ENCODE measurements at regions of chr6 and their contacts with region 1.

Region 1: GRCh38 chr6:157597446-157598312 is 216.7 kb downstream of the ZDHHC14 start:
- DNase-seq: peak; percentile 62 to 73
- H3K4me3 ChIP-seq: no peak overlapping the region
- H3K4me3 Mint-ChIP-seq: peak overlapping the region; percentile 8
- H3K27ac Mint-ChIP-seq: peak overlapping the region; percentile 76
- H3K4me1 ChIP-seq: peaks cover 12% of the 10 kb centered on the region
- H3K4me1 Mint-ChIP-seq: peaks cover 23% of the 10 kb centered on the region
- H3K27me3 ChIP-seq: no peaks in the 10 kb centered on the region
- H3K27me3 Mint-ChIP-seq: no peaks in the 10 kb centered on the region
- CTCF ChIP-seq: peak; percentile 67 to 68

Region 2: DNA sequence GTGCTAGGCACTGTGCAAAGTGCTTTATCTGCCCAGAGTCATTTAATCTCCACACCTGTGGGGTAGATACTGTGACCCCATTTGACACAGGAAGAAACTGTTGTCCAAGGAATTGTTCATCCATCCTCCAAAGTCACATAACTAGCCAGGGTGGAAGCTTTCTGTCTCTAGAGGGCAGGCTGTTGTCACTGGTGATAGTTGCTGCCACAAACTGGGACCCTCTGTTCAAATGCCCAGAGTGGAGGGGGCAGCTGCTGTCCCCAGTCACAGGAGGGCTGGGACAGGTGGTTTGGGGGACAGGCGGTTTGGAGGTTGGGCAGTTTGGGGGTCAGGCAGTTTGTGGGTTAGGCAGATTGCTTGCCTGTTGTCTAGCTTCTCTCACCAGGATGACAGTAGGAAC is 258.2 kb before region 1 on chr6:
- CTCF ChIA-PET with region 1: interaction called, 3 read pairs
- POLR2A ChIA-PET with region 1: no interaction called
- intact Hi-C with region 1: loop called (anchors 1 kb)
- DNase-seq: no peak
- H3K4me3 ChIP-seq: no peak overlapping the region
- H3K4me3 Mint-ChIP-seq: no peak overlapping the region
- H3K27ac Mint-ChIP-seq: no peak overlapping the region
- H3K4me1 ChIP-seq: 0 out of 2 replicates have a peak, but pooled peaks cover 4% of the 10 kb centered on the region
- H3K4me1 Mint-ChIP-seq: no peaks in the 10 kb centered on the region
- H3K27me3 ChIP-seq: no peaks in the 10 kb centered on the region
- H3K27me3 Mint-ChIP-seq: no peaks in the 10 kb centered on the region
- CTCF ChIP-seq: peak in 1 of 2 experiments; percentile 30

Region 3: DNA sequence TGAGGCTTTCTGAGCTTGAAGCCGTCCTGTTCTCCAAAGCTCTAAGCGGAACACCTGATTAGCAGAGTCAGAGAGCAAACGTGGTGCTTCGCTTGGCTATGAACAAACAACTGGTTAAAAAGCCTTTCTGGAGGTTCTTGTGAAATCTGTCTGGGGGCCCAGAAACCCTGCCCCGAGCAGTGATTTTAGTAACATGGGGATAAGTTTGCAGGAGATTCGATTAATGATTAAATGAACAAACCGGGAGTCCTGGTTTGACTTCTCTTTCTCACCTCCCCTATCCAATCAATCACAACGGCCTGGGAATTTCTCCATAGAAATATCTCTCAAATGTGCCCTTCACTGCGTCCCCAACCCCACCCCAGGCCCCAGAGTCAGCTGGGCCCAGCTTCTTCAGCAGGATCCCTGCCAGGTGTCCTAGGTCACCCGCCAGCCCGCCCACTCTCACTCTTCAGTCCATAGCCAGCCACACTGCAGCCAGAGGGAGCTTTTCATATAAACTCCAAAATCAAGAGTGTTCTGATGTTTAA is 173.1 kb before region 1 on chr6:
- CTCF ChIA-PET with region 1: no interaction called
- POLR2A ChIA-PET with region 1: no interaction called
- intact Hi-C with region 1: loop called (anchors 1 kb)
- DNase-seq: peak; percentile 77 to 82
- H3K4me3 ChIP-seq: 0 out of 2 replicates have a peak overlapping the region, but pooled peaks have one; percentile 5
- H3K4me3 Mint-ChIP-seq: peak overlapping the region; percentile 63
- H3K27ac Mint-ChIP-seq: peak overlapping the region; percentile 92
- H3K4me1 ChIP-seq: peaks cover 29% of the 10 kb centered on the region
- H3K4me1 Mint-ChIP-seq: peaks cover 56% of the 10 kb centered on the region
- H3K27me3 ChIP-seq: no peaks in the 10 kb centered on the region
- H3K27me3 Mint-ChIP-seq: no peaks in the 10 kb centered on the region
- CTCF ChIP-seq: peak in 1 of 2 experiments; percentile 17

Region 4: GRCh38 chr6:157531169-157531985 is 66.3 kb before region 1 on chr6:
- CTCF ChIA-PET with region 1: interaction called, 4 read pairs
- POLR2A ChIA-PET with region 1: no interaction called
- intact Hi-C with region 1: loop called (anchors 1 kb)
- DNase-seq: peak; percentile 96 to 98
- H3K4me3 ChIP-seq: peak overlapping the region; percentile 33
- H3K4me3 Mint-ChIP-seq: peak overlapping the region; percentile 77
- H3K27ac Mint-ChIP-seq: peak overlapping the region; percentile 98
- H3K4me1 ChIP-seq: peaks cover 59% of the 10 kb centered on the region
- H3K4me1 Mint-ChIP-seq: peaks cover 45% of the 10 kb centered on the region
- H3K27me3 ChIP-seq: no peaks in the 10 kb centered on the region
- H3K27me3 Mint-ChIP-seq: no peaks in the 10 kb centered on the region
- CTCF ChIP-seq: no peak

Region 5: GRCh38 chr6:157585274-157586087 is 12.2 kb before region 1 on chr6:
- CTCF ChIA-PET with region 1: interaction called, 3 read pairs
- POLR2A ChIA-PET with region 1: interaction called, 4 read pairs
- intact Hi-C with region 1: loop called (anchors 1 kb)
- DNase-seq: no peak
- H3K4me3 ChIP-seq: no peak overlapping the region
- H3K4me3 Mint-ChIP-seq: peak overlapping the region; percentile 50
- H3K27ac Mint-ChIP-seq: peak overlapping the region; percentile 92
- H3K4me1 ChIP-seq: peaks cover 27% of the 10 kb centered on the region
- H3K4me1 Mint-ChIP-seq: peaks cover 32% of the 10 kb centered on the region
- H3K27me3 ChIP-seq: no peaks in the 10 kb centered on the region
- H3K27me3 Mint-ChIP-seq: no peaks in the 10 kb centered on the region
- CTCF ChIP-seq: no peak

Region 6: GRCh38 chr6:157688960-157689599 is 91.4 kb after region 1 on chr6:
- CTCF ChIA-PET with region 1: no interaction called
- POLR2A ChIA-PET with region 1: no interaction called
- intact Hi-C with region 1: no loop called
- DNase-seq: peak in 1 of 2 experiments; percentile 34
- H3K4me3 ChIP-seq: no peak overlapping the region
- H3K4me3 Mint-ChIP-seq: no peak overlapping the region
- H3K27ac Mint-ChIP-seq: no peak overlapping the region
- H3K4me1 ChIP-seq: 0 out of 2 replicates have a peak, but pooled peaks cover 5% of the 10 kb centered on the region
- H3K4me1 Mint-ChIP-seq: peaks cover 7% of the 10 kb centered on the region
- H3K27me3 ChIP-seq: no peaks in the 10 kb centered on the region
- H3K27me3 Mint-ChIP-seq: no peaks in the 10 kb centered on the region
- CTCF ChIP-seq: peak in 1 of 2 experiments; percentile 23

Region 7: DNA sequence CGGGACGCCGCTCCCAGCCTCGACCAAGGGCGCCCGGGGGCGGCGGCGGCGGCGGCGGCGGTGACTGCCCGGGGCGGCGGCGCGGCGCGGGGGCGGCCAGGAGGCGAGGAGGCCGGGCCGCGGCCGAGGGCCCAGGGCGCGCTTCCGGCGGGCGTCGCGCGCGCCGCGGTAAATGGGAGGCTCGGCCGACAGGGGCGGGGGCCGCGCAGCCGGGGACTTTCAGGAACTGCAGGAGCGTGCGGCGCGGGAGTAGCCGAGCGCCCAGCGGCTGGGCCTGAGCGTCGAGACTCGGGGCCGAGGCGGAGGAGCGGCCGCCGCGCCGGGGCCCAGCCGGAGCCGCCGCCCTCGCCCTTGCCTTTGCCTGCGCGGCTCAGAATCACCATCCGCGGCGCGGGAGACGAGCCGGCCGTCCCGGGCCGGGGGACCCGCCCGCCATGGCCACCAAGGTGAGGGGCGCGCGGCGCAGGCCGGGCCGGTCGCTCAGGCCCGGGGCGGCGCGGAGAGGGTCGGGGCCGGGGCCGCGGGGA is 225.4 kb after region 1 on chr6 and contains the start of gene SNX9:
- CTCF ChIA-PET with region 1: no interaction called
- POLR2A ChIA-PET with region 1: no interaction called
- intact Hi-C with region 1: no loop called
- DNase-seq: peak; percentile 68 to 82
- H3K4me3 ChIP-seq: peak within 1 kb of the TSS; percentile 92
- H3K4me3 Mint-ChIP-seq: peak within 1 kb of the TSS; percentile 93
- H3K27ac Mint-ChIP-seq: peak within 1 kb of the TSS; percentile 93
- H3K4me1 ChIP-seq: peaks cover 22% of the 10 kb centered on the region
- H3K4me1 Mint-ChIP-seq: peaks cover 9% of the 10 kb centered on the region
- H3K27me3 ChIP-seq: no peaks in the 10 kb centered on the region
- H3K27me3 Mint-ChIP-seq: no peaks in the 10 kb centered on the region
- CTCF ChIP-seq: no peak
- total RNA-seq, gene SNX9: 27.4 and 29.5 TPM in 2 replicates

Measured in Caco-2 (cell line).